Vagina (tissue), 2 donors: ENCODE measurements at regions of chr17 and their contacts with region 1.

Region 1: DNA sequence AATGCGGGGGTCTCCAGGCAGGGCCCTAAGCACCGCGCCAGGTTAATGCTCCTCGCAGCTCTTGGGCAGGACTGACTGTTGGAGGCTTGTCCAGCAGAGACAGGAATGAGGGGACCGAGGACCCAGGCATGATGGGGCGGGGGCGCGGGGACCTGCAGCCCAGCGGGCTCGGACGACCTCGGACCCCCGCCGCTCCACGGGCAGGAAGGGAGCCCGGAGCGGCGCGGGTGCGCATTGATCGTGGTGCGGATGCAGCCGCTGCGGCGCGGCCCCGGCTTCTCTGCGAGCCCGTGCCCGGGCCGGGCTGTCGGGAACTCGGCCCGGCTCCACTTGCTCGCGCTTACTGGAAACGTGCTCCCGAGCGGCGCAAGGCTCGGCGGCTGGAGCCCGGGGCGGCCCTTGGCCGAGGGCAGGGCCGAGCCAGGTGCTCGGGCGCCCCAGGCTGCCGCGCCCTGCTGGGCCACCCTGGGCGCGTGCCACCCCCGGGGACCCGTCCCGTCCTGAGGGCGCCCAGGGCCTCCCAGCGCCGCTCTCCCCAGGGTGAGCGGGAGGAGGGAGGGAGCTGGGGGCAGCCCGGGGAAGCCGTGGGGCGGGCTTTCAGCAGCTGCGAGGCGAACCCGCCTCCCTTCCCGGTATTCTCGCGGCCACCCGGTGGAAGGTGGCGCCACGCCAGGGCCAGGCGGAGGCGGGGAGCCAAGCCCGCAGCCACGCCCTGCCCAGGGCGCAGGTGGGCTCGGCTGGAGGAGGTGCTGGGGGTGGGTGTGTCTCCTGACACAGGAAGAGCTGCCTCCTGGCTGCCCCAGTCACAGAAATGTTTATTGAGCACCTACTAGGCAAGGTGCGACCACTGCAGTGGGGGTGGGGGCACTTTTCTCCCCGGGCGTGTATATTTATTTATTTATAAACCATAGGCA is 45.9 kb downstream of the SOCS3 start:
- DNase-seq: no peak
- H3K4me3 ChIP-seq: peak overlapping the region; percentile 37 to 52
- H3K27ac ChIP-seq: peak overlapping the region; percentile 92
- H3K4me1 ChIP-seq: peaks cover 44% of the 10 kb centered on the region
- H3K27me3 ChIP-seq: no peaks in the 10 kb centered on the region
- CTCF ChIP-seq: no peak
- POLR2A ChIP-seq: no peak

Region 2: DNA sequence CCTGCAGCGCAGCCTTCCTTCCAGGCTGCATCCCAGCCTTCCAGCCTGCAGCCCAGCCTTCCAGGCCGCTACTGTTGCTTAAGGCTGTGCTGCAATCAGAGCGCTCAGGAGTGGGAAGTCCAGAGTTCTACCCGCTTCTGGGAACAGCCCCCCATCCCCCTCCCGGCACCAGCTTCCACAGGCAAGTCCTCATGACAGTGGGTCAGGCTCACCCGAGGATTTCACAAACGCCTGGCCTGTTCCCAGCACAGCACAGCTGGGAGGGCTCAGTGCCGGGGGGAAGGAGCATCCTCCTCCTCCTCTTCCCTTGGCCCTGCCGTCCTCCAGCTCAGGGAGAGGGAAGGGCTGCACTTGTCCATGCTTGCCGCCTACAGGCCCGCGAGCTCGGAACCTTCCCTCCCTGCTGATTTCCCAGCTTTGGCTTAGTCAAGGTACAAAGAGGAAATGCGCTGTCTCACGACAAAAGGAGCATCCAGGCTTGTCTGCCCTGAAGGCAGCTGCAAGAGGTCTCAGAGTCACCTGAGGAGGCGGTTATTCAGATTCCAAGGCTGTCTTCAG is 37.5 kb after region 1 on chr17:
- intact Hi-C with region 1: loop called (anchors 2 kb)
- DNase-seq: peak in 1 of 2 donors; percentile 100
- H3K4me3 ChIP-seq: peak overlapping the region in 1 of 2 donors; percentile 53
- H3K27ac ChIP-seq: peak overlapping the region; percentile 94
- H3K4me1 ChIP-seq: peaks cover 49% of the 10 kb centered on the region
- H3K27me3 ChIP-seq: no peaks in the 10 kb centered on the region
- CTCF ChIP-seq: peak in 2 of 3 experiments; percentile 6 to 31
- POLR2A ChIP-seq: peak in 1 of 2 donors; percentile 37

Region 3: GRCh38 chr17:78360371-78361224 is 46.6 kb after region 1 on chr17:
- intact Hi-C with region 1: loop called (anchors 2 kb)
- DNase-seq: no peak
- H3K4me3 ChIP-seq: peak overlapping the region; percentile 57 to 81
- H3K27ac ChIP-seq: peak overlapping the region; percentile 94
- H3K4me1 ChIP-seq: peaks cover 39% of the 10 kb centered on the region
- H3K27me3 ChIP-seq: no peaks in the 10 kb centered on the region
- CTCF ChIP-seq: peak; percentile 85 to 94 (median 85)
- POLR2A ChIP-seq: no peak